Calu3 (cell line): ENCODE measurements at regions of chr15 and their contacts with region 1.

Region 1: GRCh38 chr15:79513940-79514339 is 81.8 kb downstream of the MINAR1 start:
- DNase-seq: no peak
- H3K4me3 Mint-ChIP-seq: no peak overlapping the region
- H3K27ac Mint-ChIP-seq: no peak overlapping the region
- H3K4me1 Mint-ChIP-seq: no peaks in the 10 kb centered on the region
- H3K27me3 Mint-ChIP-seq: peaks cover 32% of the 10 kb centered on the region
- CTCF ChIP-seq: no peak

Region 2: GRCh38 chr15:78828920-78829319 is 685.0 kb before region 1 on chr15:
- CTCF ChIA-PET with region 1: no interaction called
- intact Hi-C with region 1: loop called (anchors 5 kb)
- DNase-seq: no peak
- H3K4me3 Mint-ChIP-seq: no peak overlapping the region
- H3K27ac Mint-ChIP-seq: no peak overlapping the region
- H3K4me1 Mint-ChIP-seq: no peaks in the 10 kb centered on the region
- H3K27me3 Mint-ChIP-seq: peaks cover 35% of the 10 kb centered on the region
- CTCF ChIP-seq: no peak

Region 3: DNA sequence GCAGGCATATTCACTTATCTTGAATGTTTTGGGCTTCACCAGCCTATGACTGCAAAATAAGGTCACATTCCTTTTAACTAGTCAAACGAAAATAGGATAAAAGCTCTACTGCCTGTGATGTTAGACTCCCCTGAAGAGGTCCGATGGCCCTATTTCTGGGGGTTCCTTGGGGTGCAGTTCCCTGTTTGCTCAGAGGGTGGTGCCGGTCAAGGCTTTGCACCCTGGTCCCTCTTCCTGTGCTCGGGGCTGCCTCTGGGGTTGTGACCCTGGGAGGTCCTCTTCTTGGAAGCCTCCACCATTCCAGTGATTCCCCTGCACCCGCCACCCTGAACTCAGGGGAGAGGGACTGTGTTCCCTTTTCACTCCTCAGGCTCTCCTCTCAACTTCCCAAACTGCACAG is 318.1 kb before region 1 on chr15:
- CTCF ChIA-PET with region 1: no interaction called
- intact Hi-C with region 1: no loop called
- DNase-seq: no peak
- H3K4me3 Mint-ChIP-seq: no peak overlapping the region
- H3K27ac Mint-ChIP-seq: no peak overlapping the region
- H3K4me1 Mint-ChIP-seq: no peaks in the 10 kb centered on the region
- H3K27me3 Mint-ChIP-seq: peaks cover 85% of the 10 kb centered on the region
- CTCF ChIP-seq: no peak

Region 4: DNA sequence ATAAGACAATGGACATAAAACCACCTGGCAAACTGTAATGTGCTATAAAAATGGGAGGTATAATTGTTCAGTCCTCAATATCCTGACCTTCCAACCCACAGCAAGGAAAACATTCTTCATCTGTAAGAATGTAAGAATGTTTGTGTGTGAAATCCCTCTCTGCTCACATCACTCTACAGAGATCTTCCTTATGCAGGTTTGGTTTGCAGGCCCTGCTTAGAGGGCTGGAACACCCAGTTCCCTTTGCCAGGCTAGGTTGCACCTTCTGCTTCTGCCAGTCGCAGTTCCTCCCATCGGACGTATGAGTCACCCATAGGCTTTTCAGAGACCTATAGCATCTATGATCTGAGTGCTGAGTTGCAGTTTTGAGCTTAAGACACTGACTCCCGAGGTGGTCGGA is 105.9 kb before region 1 on chr15:
- CTCF ChIA-PET with region 1: no interaction called
- intact Hi-C with region 1: no loop called
- DNase-seq: no peak
- H3K4me3 Mint-ChIP-seq: no peak overlapping the region
- H3K27ac Mint-ChIP-seq: no peak overlapping the region
- H3K4me1 Mint-ChIP-seq: no peaks in the 10 kb centered on the region
- H3K27me3 Mint-ChIP-seq: no peaks in the 10 kb centered on the region
- CTCF ChIP-seq: no peak